HEK293 (cell line): ENCODE measurements at regions of chr7 and their contacts with region 1.

Region 1: GRCh38 chr7:2709553-2710285 is 21.7 kb downstream of the AMZ1 start:
- H3K4me3 ChIP-seq: no peak overlapping the region
- H3K27ac ChIP-seq: no peak overlapping the region
- H3K4me1 ChIP-seq: no peaks in the 10 kb centered on the region
- CTCF ChIP-seq: peak; percentile 79

Region 2: DNA sequence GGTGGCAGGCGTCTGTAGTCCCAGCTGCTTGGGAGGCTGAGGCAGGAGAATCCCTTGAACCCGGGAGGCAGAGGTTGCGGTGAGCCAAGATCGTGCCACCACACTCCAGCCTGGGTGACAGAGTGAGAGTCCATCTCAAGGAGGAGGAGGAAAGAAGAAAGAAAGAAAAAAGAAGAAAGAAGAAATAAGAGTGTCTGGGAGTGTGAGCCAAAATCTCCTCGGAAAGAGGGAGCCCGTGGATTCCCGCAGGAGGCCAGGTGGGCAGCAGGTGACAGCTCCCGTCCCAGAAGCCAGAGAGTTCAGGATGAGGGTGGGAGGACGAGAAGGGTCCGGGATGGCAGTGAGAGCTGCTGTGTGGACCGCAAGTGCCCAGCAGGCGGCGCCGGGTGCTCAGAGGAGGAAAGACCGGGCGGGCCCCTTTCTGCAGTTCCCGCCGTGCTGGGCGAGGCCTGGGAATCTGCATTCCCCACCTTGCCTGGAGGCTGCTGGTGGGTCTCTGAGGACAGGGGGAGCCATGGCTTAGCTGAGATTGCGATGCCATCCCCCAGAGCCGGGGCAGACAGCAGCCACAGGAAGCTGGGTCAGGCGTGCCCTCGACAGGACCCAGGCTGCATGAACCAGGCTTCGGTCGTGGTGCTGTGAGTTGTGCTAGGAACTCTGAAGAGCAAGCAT is 38.9 kb before region 1 on chr7:
- CTCF ChIA-PET with region 1: interaction called, 39 read pairs
- POLR2A ChIA-PET with region 1: no interaction called
- H3K4me3 ChIP-seq: no peak overlapping the region
- H3K27ac ChIP-seq: no peak overlapping the region
- H3K4me1 ChIP-seq: no peaks in the 10 kb centered on the region
- CTCF ChIP-seq: peak; percentile 64

Region 3: GRCh38 chr7:2688409-2689331 is 21.0 kb before region 1 on chr7:
- CTCF ChIA-PET with region 1: interaction called, 39 read pairs
- POLR2A ChIA-PET with region 1: no interaction called
- H3K4me3 ChIP-seq: no peak overlapping the region
- H3K27ac ChIP-seq: no peak overlapping the region
- H3K4me1 ChIP-seq: no peaks in the 10 kb centered on the region
- CTCF ChIP-seq: no peak

Region 4: GRCh38 chr7:2698581-2699288 is 11.0 kb before region 1 on chr7:
- CTCF ChIA-PET with region 1: interaction called, 14 read pairs
- POLR2A ChIA-PET with region 1: no interaction called
- H3K4me3 ChIP-seq: no peak overlapping the region
- H3K27ac ChIP-seq: no peak overlapping the region
- H3K4me1 ChIP-seq: no peaks in the 10 kb centered on the region
- CTCF ChIP-seq: no peak